ENCODE measurements at regions of chr10 and their contacts with region 1.

Region 1: GRCh38 chr10:102245101-102245931 is at the start of gene GBF1:
- DNase-seq: peak; percentile 90
- H3K4me3 Mint-ChIP-seq: peak within 1 kb of the TSS; percentile 96
- H3K27ac Mint-ChIP-seq: peak within 1 kb of the TSS; percentile 91
- H3K4me1 Mint-ChIP-seq: peaks cover 38% of the 10 kb centered on the region
- H3K27me3 Mint-ChIP-seq: peaks cover 9% of the 10 kb centered on the region
- total RNA-seq, gene GBF1: 46.7 TPM in 2 replicates

Region 2: GRCh38 chr10:102055647-102056419 is 189.5 kb before region 1 on chr10 and contains the start of gene ARMH3:
- intact Hi-C with region 1: loop called (anchors 2 kb)
- DNase-seq: peak; percentile 90
- H3K4me3 Mint-ChIP-seq: peak within 1 kb of the TSS; percentile 89
- H3K27ac Mint-ChIP-seq: peak within 1 kb of the TSS; percentile 94
- H3K4me1 Mint-ChIP-seq: peaks cover 31% of the 10 kb centered on the region
- H3K27me3 Mint-ChIP-seq: no peaks in the 10 kb centered on the region
- total RNA-seq, gene ARMH3: 21.5 and 24.8 TPM in 2 replicates

Region 3: GRCh38 chr10:102167861-102168260 is 77.5 kb before region 1 on chr10:
- intact Hi-C with region 1: loop called (anchors 1 kb)
- DNase-seq: no peak
- H3K4me3 Mint-ChIP-seq: no peak overlapping the region
- H3K27ac Mint-ChIP-seq: no peak overlapping the region
- H3K4me1 Mint-ChIP-seq: peaks cover 10% of the 10 kb centered on the region
- H3K27me3 Mint-ChIP-seq: no peaks in the 10 kb centered on the region

Region 4: DNA sequence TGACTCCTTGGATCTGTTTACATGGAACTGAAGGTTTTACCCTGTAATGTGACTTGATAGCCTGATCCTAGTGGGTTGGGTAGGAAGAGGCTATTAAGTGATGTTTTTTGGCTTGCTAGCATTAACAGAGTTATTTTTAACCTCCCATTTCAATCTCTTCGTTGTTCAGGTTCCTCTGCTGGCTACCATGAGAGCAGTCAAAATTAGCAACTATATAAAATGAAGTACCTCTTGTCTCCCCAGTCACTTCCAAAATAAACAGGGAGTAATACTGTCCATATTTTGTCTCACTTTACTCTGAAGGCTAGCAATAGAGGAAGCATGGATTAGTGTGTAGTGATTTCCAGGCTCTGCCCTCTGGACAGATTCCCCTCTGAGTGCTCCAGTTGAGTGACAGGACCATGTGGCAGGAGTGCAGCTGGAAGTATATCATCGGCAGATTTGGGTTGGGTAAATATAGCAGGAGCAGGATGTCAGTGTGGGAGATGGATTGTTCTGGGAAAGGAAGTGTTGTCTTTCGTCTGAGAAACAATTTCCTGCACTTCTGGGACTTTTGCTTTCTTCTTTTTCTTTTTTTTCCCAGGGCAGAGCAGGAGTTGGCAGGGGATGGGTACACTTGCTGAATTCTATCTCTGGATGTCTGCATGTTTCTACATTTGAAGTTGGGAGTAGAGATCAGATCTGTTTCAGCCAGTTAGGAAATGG is 35.2 kb after region 1 on chr10:
- intact Hi-C with region 1: loop called (anchors 2 kb)
- DNase-seq: no peak
- H3K4me3 Mint-ChIP-seq: peak overlapping the region; percentile 28
- H3K27ac Mint-ChIP-seq: peak overlapping the region; percentile 37
- H3K4me1 Mint-ChIP-seq: peaks cover 60% of the 10 kb centered on the region
- H3K27me3 Mint-ChIP-seq: no peaks in the 10 kb centered on the region

Region 5: DNA sequence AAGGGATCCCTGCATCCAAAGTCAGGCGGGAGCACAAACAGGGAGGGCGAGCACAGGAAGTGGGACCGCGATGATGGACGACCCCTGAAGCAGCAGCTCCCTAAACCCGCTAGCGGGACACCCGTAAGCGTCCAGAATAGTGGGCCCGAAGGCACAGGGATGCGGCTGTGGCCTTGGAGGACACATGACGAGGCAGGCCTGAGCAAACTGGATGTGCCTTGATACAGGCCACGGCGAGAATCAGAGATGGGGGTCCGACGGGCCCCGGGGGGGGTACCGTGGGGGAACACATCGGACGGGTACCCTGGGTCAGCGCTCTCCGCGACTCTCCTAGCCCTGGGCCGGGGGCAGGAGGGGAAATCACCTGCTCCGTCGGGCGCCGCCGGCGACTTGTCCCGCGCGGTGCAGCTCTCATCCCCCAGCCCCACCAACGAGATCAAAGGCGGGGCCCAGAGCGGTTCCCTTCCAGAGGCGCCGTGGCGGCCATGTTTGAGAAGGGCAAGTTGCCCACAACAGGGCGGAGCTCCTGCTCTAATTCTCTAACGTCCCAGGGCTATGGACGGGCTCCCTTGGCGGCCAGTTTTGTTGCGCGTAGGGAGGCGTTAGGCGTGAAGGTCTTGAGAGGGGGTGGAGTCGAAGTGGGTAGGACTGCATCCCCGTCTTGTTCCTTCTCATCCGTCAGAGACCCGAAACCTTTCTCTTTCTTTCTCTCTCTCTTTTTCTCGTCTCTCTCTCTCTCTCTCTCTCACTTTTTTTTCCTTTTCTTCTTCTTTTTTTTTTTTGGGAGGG is 187.0 kb after region 1 on chr10 and contains the start of gene CUEDC2:
- intact Hi-C with region 1: loop called (anchors 1 kb)
- DNase-seq: peak; percentile 95
- H3K4me3 Mint-ChIP-seq: peak within 1 kb of the TSS; percentile 95
- H3K27ac Mint-ChIP-seq: peak within 1 kb of the TSS; percentile 94
- H3K4me1 Mint-ChIP-seq: peaks cover 55% of the 10 kb centered on the region
- H3K27me3 Mint-ChIP-seq: no peaks in the 10 kb centered on the region
- total RNA-seq, gene CUEDC2: 59.0 and 59.4 TPM in 2 replicates

Region 6: DNA sequence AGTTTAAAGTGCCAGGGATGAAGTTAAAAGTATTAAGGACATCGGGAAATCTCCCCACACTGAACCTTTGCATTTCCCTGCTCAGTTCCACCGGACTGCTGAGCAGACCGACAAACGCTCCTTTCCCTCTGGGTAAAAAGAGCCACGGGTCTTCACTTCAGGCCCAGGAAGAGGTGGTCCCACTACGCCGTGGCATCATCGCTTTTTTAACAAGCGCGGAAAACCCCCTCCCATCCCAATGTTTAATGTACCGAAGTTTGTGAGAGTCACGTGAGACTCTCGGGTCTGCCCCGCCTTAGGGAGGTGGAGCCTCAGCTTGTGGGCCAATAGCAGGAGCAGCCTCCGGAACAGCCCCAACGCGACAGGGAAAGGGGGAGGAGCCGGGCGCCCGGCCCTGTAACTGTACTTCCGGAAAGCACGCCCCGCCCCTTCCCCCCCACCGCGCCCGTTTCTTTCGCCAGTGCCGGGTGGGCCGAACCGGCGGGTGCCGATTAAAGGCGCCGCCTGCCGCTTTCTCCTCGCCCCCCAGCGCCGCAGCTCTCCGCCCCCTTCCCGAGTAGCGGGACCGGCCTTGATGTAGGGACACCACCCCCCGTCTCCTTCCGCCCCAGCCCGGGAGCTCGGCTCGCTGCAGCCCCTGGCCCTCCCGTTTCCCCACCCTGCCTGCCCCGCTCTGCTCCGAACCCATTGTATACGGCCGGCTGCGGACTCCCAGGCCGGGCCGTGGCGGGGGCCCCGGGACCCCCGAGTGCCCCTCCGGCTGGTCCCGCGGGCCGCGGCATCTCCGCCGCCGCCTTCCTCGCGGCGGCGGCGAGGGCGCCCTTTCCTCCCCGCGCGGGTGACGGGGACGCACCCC is 396.8 kb after region 1 on chr10:
- intact Hi-C with region 1: loop called (anchors 2 kb)
- DNase-seq: peak; percentile 94
- H3K4me3 Mint-ChIP-seq: peak overlapping the region; percentile 90
- H3K27ac Mint-ChIP-seq: peak overlapping the region; percentile 82
- H3K4me1 Mint-ChIP-seq: peaks cover 19% of the 10 kb centered on the region
- H3K27me3 Mint-ChIP-seq: no peaks in the 10 kb centered on the region

Measured in activated T-helper 1 cell treated with anti-CD3 and anti-CD28 coated beads, Interleukin-12 subunit alpha, Interleukin-12 subunit beta, Interleukin-2, Interleukin-4 antibody, amounts not matched to agents 30 ng/mL and 10 ng/mL and 1 ng/mL, durations not matched to agents 14 hours and 24 hours and 36 hours (primary cell).